ENCODE measurements at regions of chr10 and their contacts with region 1.

Region 1: DNA sequence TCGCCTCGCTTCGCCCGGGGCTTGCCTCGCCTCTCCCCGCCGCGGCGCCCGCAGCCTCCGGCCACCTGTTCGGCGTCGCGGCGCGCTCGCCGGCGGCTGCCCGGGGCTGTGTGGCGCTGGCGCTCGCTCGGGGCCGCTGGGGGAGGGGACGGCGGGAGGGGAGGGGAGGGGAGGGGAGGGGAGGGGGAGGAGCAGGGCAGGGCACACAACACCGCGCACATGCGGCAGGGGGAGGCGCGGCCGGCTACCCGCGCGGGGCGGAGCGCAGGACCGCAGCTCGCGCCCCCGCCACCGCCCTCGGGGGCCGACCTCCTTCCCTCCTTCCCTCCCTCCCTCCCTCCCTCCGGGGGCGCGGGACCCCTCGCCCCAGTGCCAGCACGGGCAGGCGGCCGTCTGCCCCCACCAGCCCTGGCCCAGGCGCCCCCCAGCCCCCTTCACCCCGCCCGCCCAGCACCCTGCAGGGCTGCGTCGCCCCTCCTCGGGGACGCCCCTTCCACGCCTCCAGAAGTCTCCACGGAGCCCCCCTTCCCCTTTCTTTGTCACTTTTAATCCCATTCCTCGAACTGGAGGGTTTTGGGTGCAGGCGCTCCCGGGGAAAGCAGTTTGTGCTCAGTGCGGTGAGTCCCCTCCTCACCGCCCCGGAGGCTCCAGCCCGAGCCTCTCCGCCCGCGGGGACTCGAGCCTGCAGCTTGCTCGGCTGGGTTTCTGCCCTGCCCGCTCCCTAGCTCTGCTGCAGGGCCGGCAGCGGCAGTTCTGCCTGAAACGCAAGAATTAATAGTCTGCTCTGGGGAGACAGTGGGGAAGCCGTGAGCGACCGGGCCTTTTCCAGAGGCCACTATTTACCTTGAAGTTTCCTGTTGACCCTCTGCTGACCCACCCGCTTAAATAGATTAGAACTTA is at the start of gene PARD3:
- DNase-seq: peak; percentile 77 to 82 (median 78)
- H3K4me3 ChIP-seq: peak within 1 kb of the TSS; percentile 67
- H3K27ac ChIP-seq: peak within 1 kb of the TSS; percentile 94 to 97
- H3K4me1 ChIP-seq: peaks cover 13% of the 10 kb centered on the region
- H3K27me3 ChIP-seq: no peaks in the 10 kb centered on the region
- CTCF ChIP-seq: no peak
- EP300 ChIP-seq: no peak
- POLR2A ChIP-seq: no peak
- total RNA-seq, gene PARD3: 43.1 to 92.3 (median 67.1) TPM

Region 2: DNA sequence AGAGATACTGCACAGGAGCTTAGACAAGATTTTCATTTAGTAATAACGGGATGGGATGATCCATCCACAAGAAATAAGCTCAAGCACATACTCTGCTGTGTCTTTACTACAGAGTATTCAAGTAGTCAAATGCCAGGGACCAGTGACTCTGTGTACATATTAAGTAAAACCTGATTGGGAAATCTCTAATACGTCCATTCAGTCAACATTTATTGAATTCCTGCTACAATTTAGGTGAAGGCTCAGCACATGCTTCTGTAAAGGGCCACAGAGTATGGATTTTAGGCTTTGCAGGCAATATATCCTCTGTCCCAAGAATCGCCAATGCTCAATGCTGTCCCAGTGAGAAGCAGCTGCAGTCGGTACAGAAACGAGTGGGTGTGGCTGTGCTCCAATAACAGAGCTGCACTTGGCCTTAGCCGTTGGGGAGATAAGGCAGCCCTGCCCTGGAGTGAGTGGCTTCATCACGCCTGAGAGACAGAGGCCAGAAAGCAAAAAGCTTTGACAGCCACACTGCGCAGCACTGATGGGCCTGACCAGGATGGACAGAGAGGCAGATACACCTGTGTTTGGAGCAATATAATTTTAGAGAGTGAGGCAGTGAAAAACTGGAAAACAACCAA is 187.2 kb before region 1 on chr10:
- intact Hi-C with region 1: no loop called
- DNase-seq: peak; percentile 52 to 58 (median 57)
- H3K4me3 ChIP-seq: no peak overlapping the region
- H3K27ac ChIP-seq: no peak overlapping the region
- H3K4me1 ChIP-seq: peaks cover 18% of the 10 kb centered on the region
- H3K27me3 ChIP-seq: no peaks in the 10 kb centered on the region
- CTCF ChIP-seq: no peak
- EP300 ChIP-seq: no peak
- POLR2A ChIP-seq: no peak

Region 3: GRCh38 chr10:34677591-34677990 is 137.8 kb before region 1 on chr10:
- intact Hi-C with region 1: loop called in 2 of 4 experiments (anchors 10 kb)
- DNase-seq: no peak
- H3K4me3 ChIP-seq: no peak overlapping the region
- H3K27ac ChIP-seq: no peak overlapping the region
- H3K4me1 ChIP-seq: peaks cover 4% of the 10 kb centered on the region
- H3K27me3 ChIP-seq: no peaks in the 10 kb centered on the region
- CTCF ChIP-seq: no peak
- EP300 ChIP-seq: no peak
- POLR2A ChIP-seq: no peak

Region 4: GRCh38 chr10:34739915-34740314 is 75.5 kb before region 1 on chr10:
- intact Hi-C with region 1: loop called in 1 of 4 experiments (anchors 10 kb)
- DNase-seq: peak; percentile 76 to 84 (median 76)
- H3K4me3 ChIP-seq: no peak overlapping the region
- H3K27ac ChIP-seq: peak overlapping the region in 1 of 2 donors; percentile 75
- H3K4me1 ChIP-seq: peaks cover 17% of the 10 kb centered on the region
- H3K27me3 ChIP-seq: no peaks in the 10 kb centered on the region
- CTCF ChIP-seq: no peak
- EP300 ChIP-seq: no peak
- POLR2A ChIP-seq: no peak